Sigmoid colon (tissue), 7 donors: ENCODE measurements at regions of chr1 and their contacts with region 1.

Region 1: DNA sequence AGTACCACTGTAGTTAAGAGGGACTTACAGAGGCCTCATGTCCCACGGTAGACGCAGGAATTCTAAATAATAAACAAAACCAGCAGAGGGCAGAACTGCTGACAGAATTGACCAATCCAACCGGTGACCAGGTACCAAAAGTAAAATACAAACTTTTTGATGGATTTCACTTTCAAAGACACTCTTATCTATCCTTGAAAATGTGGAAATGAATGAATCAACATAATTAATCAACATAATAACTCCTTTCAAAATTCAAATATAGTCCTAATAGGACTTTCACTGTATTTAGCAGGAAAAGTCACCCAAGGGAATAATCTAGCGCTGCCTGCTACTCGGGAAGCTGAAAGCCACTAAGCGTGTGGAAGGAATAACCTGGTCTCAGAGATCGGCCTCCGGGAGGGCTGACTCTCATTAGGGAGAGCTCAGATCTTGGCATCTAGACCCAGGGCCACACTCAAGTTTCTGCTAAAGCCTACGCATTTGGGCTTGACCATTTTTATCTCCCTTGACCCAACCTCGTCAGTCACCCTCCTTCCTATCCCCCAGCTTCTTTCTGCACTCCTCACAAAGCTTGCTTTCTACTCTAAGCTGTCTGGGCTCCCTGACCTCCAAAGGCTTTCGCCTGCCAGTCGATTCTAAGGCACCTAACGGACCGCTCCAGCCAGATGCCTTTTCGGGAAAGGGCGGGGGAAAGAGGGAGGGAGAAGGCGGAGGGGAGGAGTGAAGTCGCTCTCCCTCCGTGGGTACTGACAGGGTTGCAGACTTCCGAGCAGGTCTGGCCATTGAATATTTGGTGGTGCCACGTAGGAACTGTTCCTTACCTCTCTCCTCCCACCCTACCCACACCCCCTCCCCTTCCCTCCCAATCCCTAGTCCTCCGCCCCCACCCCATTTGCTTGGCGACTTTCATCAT is 1.6 kb downstream of the COL11A1 start:
- DNase-seq: peak; percentile 66
- H3K4me3 ChIP-seq: peak overlapping the region; percentile 12 to 49 (median 42)
- H3K27ac ChIP-seq: peak overlapping the region in 2 of 4 donors; percentile 17 to 20
- H3K4me1 ChIP-seq: peaks cover 0 to 31% (median 24%) of the 10 kb centered on the region in 4 donors
- H3K27me3 ChIP-seq: no peaks in the 10 kb centered on the region
- CTCF ChIP-seq: peak in 2 of 4 experiments; percentile 10 to 30
- EP300 ChIP-seq: no peak
- POLR2A ChIP-seq: no peak

Region 2: DNA sequence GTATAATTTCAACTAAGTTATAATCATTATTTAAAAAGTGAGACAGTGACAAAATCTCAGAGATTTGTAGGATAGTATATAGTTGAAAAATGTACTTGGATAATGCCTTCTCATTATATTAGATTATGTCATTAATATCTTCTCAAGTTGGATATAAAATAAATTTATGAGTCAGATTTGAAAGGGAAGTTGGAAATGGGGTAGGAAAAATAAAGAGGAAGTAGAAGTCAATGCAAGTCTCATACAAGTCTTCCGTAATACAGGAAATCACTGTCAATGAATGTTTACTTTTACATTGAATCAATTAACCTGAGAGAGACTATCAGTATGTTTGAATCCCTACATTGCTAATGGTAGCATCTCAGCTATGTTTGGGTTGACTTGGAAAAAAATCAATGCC is 402.6 kb after region 1 on chr1:
- intact Hi-C with region 1: loop called (anchors 5 kb)
- DNase-seq: no peak
- H3K4me3 ChIP-seq: no peak overlapping the region
- H3K27ac ChIP-seq: no peak overlapping the region
- H3K4me1 ChIP-seq: no peaks in the 10 kb centered on the region
- H3K27me3 ChIP-seq: no peaks in the 10 kb centered on the region
- CTCF ChIP-seq: no peak
- EP300 ChIP-seq: no peak
- POLR2A ChIP-seq: no peak